Stomach (tissue), 19 donors: ENCODE measurements at regions of chr4 and their contacts with region 1.

Region 1: GRCh38 chr4:87465739-87466366 is 43.5 kb downstream of the NUDT9 start:
- DNase-seq: peak in 1 of 2 donors; percentile 75
- H3K4me3 ChIP-seq: no peak overlapping the region
- H3K27ac ChIP-seq: no peak overlapping the region
- H3K4me1 ChIP-seq: peaks cover 0 to 19% (median 7%) of the 10 kb centered on the region in 4 donors
- H3K27me3 ChIP-seq: no peaks in the 10 kb centered on the region
- CTCF ChIP-seq: peak in 5 of 7 experiments; percentile 29 to 75 (median 66)
- EP300 ChIP-seq: no peak
- POLR2A ChIP-seq: no peak

Region 2: GRCh38 chr4:87382931-87383330 is 82.9 kb before region 1 on chr4:
- intact Hi-C with region 1: loop called (anchors 5 kb)
- DNase-seq: no peak
- H3K4me3 ChIP-seq: no peak overlapping the region
- H3K27ac ChIP-seq: no peak overlapping the region
- H3K4me1 ChIP-seq: peaks cover 0 to 23% (median 8%) of the 10 kb centered on the region in 4 donors
- H3K27me3 ChIP-seq: no peaks in the 10 kb centered on the region
- CTCF ChIP-seq: no peak
- EP300 ChIP-seq: no peak
- POLR2A ChIP-seq: no peak

Region 3: GRCh38 chr4:88130544-88131305 is 664.9 kb after region 1 on chr4:
- intact Hi-C with region 1: no loop called
- DNase-seq: no peak
- H3K4me3 ChIP-seq: no peak overlapping the region
- H3K27ac ChIP-seq: no peak overlapping the region
- H3K4me1 ChIP-seq: no peaks in the 10 kb centered on the region
- H3K27me3 ChIP-seq: no peaks in the 10 kb centered on the region
- CTCF ChIP-seq: no peak
- EP300 ChIP-seq: no peak
- POLR2A ChIP-seq: no peak